Activated naive CD4-positive, alpha-beta T cell treated with anti-CD3 and anti-CD28 coated beads for 36 hours (primary cell): ENCODE measurements at regions of chr2 and their contacts with region 1.

Region 1: GRCh38 chr2:169479257-169480078 is at the start of gene BBS5:
- DNase-seq: peak; percentile 87
- H3K4me3 Mint-ChIP-seq: peak within 1 kb of the TSS; percentile 91
- H3K27ac Mint-ChIP-seq: no peak within 1 kb of the TSS
- H3K4me1 Mint-ChIP-seq: peaks cover 10% of the 10 kb centered on the region
- H3K27me3 Mint-ChIP-seq: no peaks in the 10 kb centered on the region
- total RNA-seq, gene BBS5: 2.1 to 2.2 TPM

Region 2: GRCh38 chr2:168363347-168364092 is 1115.9 kb before region 1 on chr2:
- CTCF ChIA-PET with region 1: no interaction called
- intact Hi-C with region 1: no loop called
- DNase-seq: no peak
- H3K4me3 Mint-ChIP-seq: no peak overlapping the region
- H3K27ac Mint-ChIP-seq: no peak overlapping the region
- H3K4me1 Mint-ChIP-seq: peaks cover 5% of the 10 kb centered on the region
- H3K27me3 Mint-ChIP-seq: no peaks in the 10 kb centered on the region

Region 3: GRCh38 chr2:168530982-168531622 is 948.4 kb before region 1 on chr2:
- CTCF ChIA-PET with region 1: no interaction called
- intact Hi-C with region 1: no loop called
- DNase-seq: no peak
- H3K4me3 Mint-ChIP-seq: no peak overlapping the region
- H3K27ac Mint-ChIP-seq: no peak overlapping the region
- H3K4me1 Mint-ChIP-seq: peaks cover 52% of the 10 kb centered on the region
- H3K27me3 Mint-ChIP-seq: no peaks in the 10 kb centered on the region

Region 4: GRCh38 chr2:169363560-169364150 is 115.8 kb before region 1 on chr2:
- CTCF ChIA-PET with region 1: no interaction called
- intact Hi-C with region 1: loop called (anchors 2 kb)
- DNase-seq: peak; percentile 63
- H3K4me3 Mint-ChIP-seq: peak overlapping the region; percentile 84
- H3K27ac Mint-ChIP-seq: peak overlapping the region; percentile 57
- H3K4me1 Mint-ChIP-seq: peaks cover 32% of the 10 kb centered on the region
- H3K27me3 Mint-ChIP-seq: peaks cover 31% of the 10 kb centered on the region

Region 5: DNA sequence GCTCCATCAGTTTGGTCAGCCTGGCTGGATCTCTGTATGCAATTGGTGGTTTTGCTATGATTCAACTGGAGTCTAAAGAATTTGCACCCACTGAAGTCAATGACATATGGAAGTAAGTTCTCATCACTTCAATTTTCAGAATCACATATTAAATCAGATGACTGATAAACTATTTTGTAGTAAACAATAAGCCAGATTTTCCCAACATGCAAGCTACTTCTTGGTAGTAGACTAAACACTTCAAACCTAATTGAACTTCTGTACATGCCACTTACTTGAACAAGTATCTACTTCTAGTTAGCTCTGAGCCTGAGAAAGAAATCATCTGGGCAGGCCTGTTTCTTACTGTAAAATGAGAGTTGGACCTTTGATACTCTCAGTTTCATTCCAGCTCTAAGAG is 41.4 kb after region 1 on chr2:
- CTCF ChIA-PET with region 1: no interaction called
- intact Hi-C with region 1: no loop called
- DNase-seq: no peak
- H3K4me3 Mint-ChIP-seq: no peak overlapping the region
- H3K27ac Mint-ChIP-seq: no peak overlapping the region
- H3K4me1 Mint-ChIP-seq: no peaks in the 10 kb centered on the region
- H3K27me3 Mint-ChIP-seq: no peaks in the 10 kb centered on the region